ENCODE measurements at regions of chr12 and their contacts with region 1.

Region 1: DNA sequence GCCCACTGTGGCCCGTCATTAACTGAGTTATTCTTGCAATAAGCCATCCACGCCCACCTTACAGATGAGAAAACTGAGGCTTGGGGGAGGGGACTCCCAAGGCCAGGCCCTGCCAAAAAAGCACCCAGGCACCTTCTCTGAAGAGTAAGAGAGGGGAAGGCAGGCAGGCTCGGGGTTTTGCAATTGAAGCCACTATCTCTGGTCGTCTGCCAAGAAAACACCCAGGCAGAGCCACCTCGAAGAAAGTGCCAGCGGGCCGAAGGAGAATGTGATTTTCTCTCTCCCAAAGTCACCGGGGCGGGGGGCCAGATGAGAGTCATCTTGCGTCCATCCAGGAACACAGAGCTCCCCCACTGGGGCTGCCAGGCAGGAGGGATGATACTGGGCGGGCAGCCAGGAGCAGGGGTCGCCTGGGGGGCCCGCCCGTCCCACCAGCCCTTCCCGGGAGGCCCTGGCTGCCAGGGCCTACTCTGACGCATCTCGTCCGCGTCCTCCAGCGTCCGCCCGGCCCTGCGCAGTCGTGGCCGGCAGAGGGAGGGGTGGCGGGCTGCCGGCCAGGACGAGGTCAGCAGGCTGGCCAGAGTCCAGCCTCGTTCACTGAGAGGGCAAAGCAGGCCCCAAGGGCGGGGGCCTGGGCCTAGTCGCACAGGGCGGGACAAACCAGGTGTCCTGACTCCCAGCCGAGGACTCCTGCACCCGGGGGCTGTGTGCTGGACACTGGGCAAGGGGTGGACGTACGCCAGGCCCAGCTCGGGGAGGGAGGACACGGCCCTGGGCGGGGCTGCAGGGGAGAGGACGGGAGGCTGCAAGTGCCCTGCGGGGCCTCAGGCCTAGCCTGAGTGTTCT is 74.4 kb downstream of the RFLNA start:
- DNase-seq: peak; percentile 96
- H3K4me3 ChIP-seq: no peak overlapping the region
- H3K27ac ChIP-seq: peak overlapping the region; percentile 89 to 97
- H3K4me1 ChIP-seq: peaks cover 18 to 70% of the 10 kb centered on the region in 2 experiments; a peak in 3 of 4 replicates
- H3K27me3 ChIP-seq: no peaks in the 10 kb centered on the region
- CTCF ChIP-seq: peak; percentile 32
- EP300 ChIP-seq: peak; percentile 76 to 79
- RAD21 ChIP-seq: peak; percentile 21

Region 2: DNA sequence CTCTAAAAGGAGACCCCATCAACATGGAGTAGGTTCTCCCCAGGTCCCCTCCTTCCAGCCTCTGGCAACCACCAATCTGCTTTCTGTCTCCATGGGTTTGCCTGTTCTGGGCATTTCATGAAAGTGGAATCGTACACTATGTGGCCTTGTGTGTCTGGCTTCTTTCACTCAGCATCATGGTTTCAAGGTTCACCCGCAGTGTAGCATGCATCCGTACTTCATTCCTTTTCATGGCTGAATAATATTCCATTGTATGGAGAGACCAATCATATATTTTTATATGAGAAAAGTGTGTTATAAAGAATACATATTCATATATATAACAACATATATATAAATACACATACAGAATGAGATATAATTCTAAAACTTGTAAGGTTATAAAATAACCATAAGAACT is 178.3 kb after region 1 on chr12:
- CTCF ChIA-PET with region 1: no interaction called
- POLR2A ChIA-PET with region 1: no interaction called
- DNase-seq: no peak
- H3K4me3 ChIP-seq: no peak overlapping the region
- H3K27ac ChIP-seq: no peak overlapping the region
- H3K4me1 ChIP-seq: peaks cover 54 to 73% of the 10 kb centered on the region in 2 experiments
- H3K27me3 ChIP-seq: no peaks in the 10 kb centered on the region
- CTCF ChIP-seq: no peak
- EP300 ChIP-seq: no peak
- RAD21 ChIP-seq: no peak

Region 3: GRCh38 chr12:124767066-124767821 is 398.0 kb after region 1 on chr12:
- CTCF ChIA-PET with region 1: interaction called, 16 read pairs
- POLR2A ChIA-PET with region 1: no interaction called
- DNase-seq: peak; percentile 95
- H3K4me3 ChIP-seq: peak overlapping the region in 1 of 2 experiments; percentile 32; a peak in 1 of 4 replicates
- H3K27ac ChIP-seq: 0 out of 4 replicates have a peak overlapping the region, but pooled peaks of 1 of the 2 experiments have one; percentile 3
- H3K4me1 ChIP-seq: peaks cover 4 to 5% of the 10 kb centered on the region in 2 experiments; a peak in 2 of 4 replicates
- H3K27me3 ChIP-seq: no peaks in the 10 kb centered on the region
- CTCF ChIP-seq: peak; percentile 98
- EP300 ChIP-seq: no peak
- RAD21 ChIP-seq: peak; percentile 95